Lower leg skin (tissue), 4 donors: ENCODE measurements at regions of chr14 and their contacts with region 1.

Region 1: DNA sequence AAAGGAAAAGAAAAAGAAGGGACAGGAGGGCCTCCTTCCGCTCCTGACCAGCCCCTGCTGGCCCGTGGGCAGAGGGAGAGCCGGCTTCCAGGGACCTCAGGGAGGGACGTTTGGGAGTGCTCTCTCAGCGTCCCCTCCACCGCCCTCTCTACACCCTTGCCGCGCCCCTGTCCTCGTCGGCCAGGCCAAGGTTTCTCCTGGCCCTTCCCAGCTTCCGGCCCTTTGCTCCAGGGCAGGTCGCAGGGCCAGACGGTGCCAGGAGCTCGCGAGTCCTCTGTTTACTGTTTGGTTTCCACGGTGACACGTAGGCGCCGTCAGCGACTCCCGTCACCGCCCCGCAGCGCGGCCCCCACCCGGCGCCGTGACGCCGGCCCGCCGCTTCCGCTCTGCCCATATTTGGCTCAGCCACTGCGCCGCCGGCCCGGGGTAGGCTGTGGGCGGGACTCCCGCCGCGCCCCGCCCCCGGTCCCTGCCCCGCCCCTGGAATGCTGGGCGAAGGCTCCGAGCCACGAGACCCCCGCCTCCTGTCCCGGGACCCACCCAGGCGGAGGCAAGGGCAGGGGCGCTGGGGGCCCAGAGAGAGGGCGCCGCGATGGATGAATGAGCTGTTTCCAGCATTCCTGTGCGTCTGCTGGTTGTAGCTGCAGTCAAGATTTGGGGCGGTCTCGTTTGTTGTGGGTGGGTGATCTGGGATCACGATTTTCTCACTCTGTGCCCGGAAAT is 15.5 kb downstream of the FOS start:
- DNase-seq: peak; percentile 93 to 99
- H3K4me3 ChIP-seq: peak overlapping the region; percentile 39
- CTCF ChIP-seq: no peak
- POLR2A ChIP-seq: no peak

Region 2: GRCh38 chr14:75230140-75231045 is 63.7 kb before region 1 on chr14:
- intact Hi-C with region 1: loop called (anchors 10 kb)
- DNase-seq: no peak
- H3K4me3 ChIP-seq: no peak overlapping the region
- CTCF ChIP-seq: no peak
- POLR2A ChIP-seq: no peak

Region 3: DNA sequence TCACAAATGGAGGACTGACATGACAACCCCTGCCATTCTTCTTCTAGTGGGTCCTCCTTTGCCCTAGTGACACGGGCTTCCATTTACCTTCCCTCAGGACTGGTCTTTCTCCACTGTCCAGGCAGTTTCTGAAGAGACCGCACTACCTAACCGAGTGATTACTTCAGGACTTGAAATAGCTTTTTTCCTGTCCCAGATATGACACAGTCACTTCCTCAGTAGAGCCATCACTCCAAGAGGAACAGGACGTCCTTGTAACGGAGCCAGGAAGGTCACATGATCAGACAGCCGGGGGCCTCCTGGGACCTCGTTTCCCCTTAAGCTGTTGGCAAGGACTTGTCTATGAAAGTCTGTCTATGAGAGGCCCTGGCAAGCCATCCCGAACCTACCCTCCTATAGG is 46.8 kb after region 1 on chr14:
- intact Hi-C with region 1: no loop called
- DNase-seq: peak; percentile 95 to 97
- H3K4me3 ChIP-seq: no peak overlapping the region
- CTCF ChIP-seq: no peak
- POLR2A ChIP-seq: no peak